GM18951 (cell line): ENCODE measurements at regions of chr1 and their contacts with region 1.

Region 1: DNA sequence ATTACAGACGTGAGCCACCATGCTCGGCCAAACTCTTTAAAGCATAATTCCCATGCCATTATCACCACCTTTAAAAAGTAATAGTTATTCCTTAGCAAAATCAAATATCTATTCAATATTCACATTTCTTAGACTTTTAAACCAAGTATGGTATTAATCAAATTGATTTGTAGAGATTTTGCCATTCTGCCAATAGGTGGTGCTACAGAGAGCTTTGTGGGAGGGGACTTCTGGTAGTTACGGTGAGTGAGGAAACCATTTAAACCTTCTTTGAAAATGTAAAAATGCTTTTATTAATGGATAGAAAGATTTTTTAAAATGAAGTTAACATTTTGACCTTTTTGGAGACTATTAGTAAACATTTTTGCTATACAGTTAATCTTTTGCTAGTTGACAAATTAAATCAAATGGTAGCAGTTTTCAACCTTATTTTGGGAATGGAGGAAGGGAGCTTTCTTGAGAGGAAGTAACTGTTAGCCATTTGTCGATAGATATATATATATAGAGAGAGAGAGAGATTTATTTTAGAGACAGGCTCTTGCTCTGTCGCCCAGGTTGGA is 19.3 kb downstream of the IARS2 start:
- POLR2A ChIP-seq: no peak

Region 2: DNA sequence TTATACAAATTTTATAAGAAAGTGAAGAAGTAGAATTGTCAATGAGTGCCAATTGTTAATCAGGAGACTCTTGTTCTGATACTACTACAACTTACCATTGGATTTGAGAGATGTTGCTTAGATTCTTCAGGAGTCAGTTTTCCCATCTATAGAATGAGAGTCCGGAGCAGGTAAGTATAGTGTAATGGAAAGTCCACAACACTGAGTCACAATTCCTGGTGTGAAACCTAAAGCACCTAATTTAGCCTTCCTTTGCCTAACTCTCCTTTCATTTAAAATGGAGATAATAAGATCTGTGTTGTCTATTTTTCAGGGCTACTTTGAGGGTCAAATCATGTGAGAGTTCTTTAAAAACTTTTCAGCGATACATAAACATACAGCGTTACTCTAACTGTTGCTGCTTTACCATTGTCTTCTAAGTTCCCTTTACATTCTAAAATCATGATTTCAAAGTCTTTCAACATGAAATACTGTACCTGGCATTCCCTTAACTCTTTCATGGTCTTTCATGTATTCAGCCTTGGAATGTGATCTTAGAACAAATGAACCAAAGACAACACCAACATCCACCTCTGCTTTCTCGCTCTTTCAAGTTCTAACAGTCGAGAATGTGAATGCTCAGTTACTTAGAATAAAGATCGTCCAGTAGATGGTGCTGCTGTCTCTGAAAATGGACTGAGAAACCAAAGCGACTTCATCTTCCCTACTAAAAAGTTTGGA is 275.8 kb before region 1 on chr1:
- in situ Hi-C with region 1: loop called (anchors 25 kb)
- POLR2A ChIP-seq: no peak

Region 3: DNA sequence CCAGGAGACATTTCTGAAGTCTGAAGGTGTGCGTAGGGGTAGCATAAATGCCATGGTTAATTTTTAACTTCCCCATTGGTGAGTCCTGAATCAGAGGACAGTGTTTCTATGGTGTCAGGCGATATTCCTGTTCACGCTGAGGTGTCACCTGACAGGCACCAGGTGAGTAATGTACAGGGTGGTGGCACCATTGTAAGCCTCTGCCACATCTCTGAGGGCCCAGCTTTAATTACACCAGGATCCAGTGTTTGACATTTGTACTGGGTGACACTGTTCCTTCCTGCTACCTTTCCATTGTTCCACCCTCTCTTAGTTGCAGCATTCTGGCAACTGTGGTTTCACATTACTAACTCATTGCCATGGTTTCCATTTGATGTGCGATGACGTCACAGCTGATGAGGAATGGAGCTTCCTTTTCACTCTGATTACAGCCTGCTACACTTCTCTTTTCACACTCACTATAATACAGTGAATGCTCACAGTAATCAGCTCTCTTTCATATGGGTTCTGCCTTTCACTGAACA is 374.1 kb after region 1 on chr1:
- in situ Hi-C with region 1: no loop called
- POLR2A ChIP-seq: no peak